ENCODE measurements at regions of chr7 and their contacts with region 1.

Region 1: GRCh38 chr7:131654668-131655326 is 98.4 kb upstream of the PODXL start:
- DNase-seq: peak; percentile 84 to 91
- ATAC-seq: peak; percentile 81 to 90 (median 89)
- H3K4me3 ChIP-seq: no peak overlapping the region
- H3K27ac ChIP-seq: peak overlapping the region in 1 of 10 donors; percentile 39
- H3K4me1 ChIP-seq: peaks cover 0 to 40% (median 11%) of the 10 kb centered on the region in 9 donors
- H3K27me3 ChIP-seq: no peaks in the 10 kb centered on the region
- CTCF ChIP-seq: peak; percentile 86 to 94 (median 90)

Region 2: GRCh38 chr7:131507592-131508331 is 147.0 kb before region 1 on chr7:
- intact Hi-C with region 1: loop called (anchors 1 to 5 kb)
- DNase-seq: peak; percentile 83 to 87
- ATAC-seq: peak; percentile 57 to 77 (median 73)
- H3K4me3 ChIP-seq: peak overlapping the region in 1 of 10 donors; percentile 11
- H3K27ac ChIP-seq: peak overlapping the region in 6 of 10 donors; percentile 23 to 60 (median 46)
- H3K4me1 ChIP-seq: peaks cover 20 to 77% (median 53%) of the 10 kb centered on the region in 9 donors
- H3K27me3 ChIP-seq: no peaks in the 10 kb centered on the region
- CTCF ChIP-seq: peak; percentile 90 to 98 (median 94)

Region 3: GRCh38 chr7:131513245-131514061 is 141.3 kb before region 1 on chr7:
- intact Hi-C with region 1: loop called (anchors 1 to 5 kb)
- DNase-seq: peak; percentile 85 to 86
- ATAC-seq: peak; percentile 85 to 93 (median 91)
- H3K4me3 ChIP-seq: no peak overlapping the region
- H3K27ac ChIP-seq: peak overlapping the region in 9 of 10 donors; percentile 3 to 82 (median 50)
- H3K4me1 ChIP-seq: peaks cover 13 to 81% (median 46%) of the 10 kb centered on the region in 9 donors
- H3K27me3 ChIP-seq: no peaks in the 10 kb centered on the region
- CTCF ChIP-seq: peak; percentile 85 to 99 (median 96)

Region 4: GRCh38 chr7:131546583-131547111 is 108.2 kb before region 1 on chr7:
- intact Hi-C with region 1: loop called in 9 of 10 experiments (anchors 2 to 10 kb)
- DNase-seq: no peak
- ATAC-seq: peak in 1 of 8 donors; percentile 12
- H3K4me3 ChIP-seq: no peak overlapping the region
- H3K27ac ChIP-seq: peak overlapping the region in 5 of 10 donors; percentile 21 to 92 (median 83)
- H3K4me1 ChIP-seq: peaks cover 9 to 97% (median 53%) of the 10 kb centered on the region in 9 donors
- H3K27me3 ChIP-seq: no peaks in the 10 kb centered on the region
- CTCF ChIP-seq: peak; percentile 18 to 74 (median 63)

Measured in heart right ventricle (tissue), 16 donors.